ENCODE measurements at regions of chr15 and their contacts with region 1.

Region 1: DNA sequence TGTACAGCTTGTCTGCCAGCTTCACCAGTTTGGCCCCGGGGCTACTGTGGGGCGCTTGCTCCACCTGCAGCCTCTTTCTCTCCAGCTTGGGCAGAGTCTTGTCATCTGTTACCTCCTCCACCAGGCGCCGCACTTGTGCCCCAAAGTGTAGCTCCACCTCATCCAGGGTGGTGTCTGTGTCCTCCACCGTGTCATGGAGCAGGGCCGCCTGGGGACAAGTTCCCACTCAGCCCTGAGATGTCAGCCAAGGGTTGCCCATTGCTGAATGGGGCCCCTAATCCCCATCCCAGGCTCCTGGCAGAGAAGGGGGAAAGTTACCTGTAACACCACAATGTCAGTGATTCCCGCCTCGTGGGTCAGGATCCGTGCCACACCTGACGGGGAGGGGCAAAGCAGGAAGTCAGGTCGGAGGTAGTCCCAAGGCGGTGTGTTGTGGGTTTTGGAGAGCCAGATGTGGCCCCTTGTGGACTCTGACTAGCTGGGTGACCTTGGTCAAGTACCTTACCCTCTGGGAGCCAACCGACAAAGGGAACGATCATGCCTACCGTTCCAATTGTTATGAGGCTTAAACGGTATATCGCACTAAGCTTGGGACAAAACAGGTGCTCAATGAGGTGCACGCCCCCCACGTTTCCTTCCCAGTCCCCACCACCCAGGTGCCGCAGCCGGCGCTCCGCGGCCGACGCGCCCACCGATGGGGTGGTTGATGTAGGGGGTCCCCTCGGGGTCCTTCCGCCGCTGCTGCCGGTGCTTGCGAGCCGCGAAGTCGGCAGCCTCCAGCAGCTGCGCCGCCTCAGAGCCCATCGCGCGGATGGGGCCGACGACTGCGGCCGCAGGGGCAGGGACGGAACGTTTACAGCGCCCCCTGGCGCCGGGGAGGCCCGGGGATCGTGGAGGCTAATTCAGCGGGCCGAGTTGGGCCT is at the start of gene HDDC3:
- DNase-seq: peak; percentile 94
- H3K4me3 ChIP-seq: peak within 1 kb of the TSS; percentile 84 to 89
- H3K27ac ChIP-seq: peak within 1 kb of the TSS; percentile 32 to 80; a peak in 3 of 4 replicates
- H3K4me1 ChIP-seq: peaks cover 13 to 41% of the 10 kb centered on the region in 2 experiments; a peak in 2 of 4 replicates
- H3K27me3 ChIP-seq: no peaks in the 10 kb centered on the region
- CTCF ChIP-seq: peak; percentile 87
- EP300 ChIP-seq: no peak
- RAD21 ChIP-seq: peak; percentile 48
- polyA plus RNA-seq, gene HDDC3: 24.2 and 25.8 TPM in 2 replicates

Region 2: GRCh38 chr15:90648137-90649070 is 283.6 kb before region 1 on chr15:
- CTCF ChIA-PET with region 1: interaction called, 19 read pairs
- POLR2A ChIA-PET with region 1: no interaction called
- DNase-seq: peak; percentile 86
- H3K4me3 ChIP-seq: no peak overlapping the region
- H3K27ac ChIP-seq: no peak overlapping the region
- H3K4me1 ChIP-seq: peaks cover 5 to 12% of the 10 kb centered on the region in 2 experiments
- H3K27me3 ChIP-seq: no peaks in the 10 kb centered on the region
- CTCF ChIP-seq: peak; percentile 96
- EP300 ChIP-seq: no peak
- RAD21 ChIP-seq: peak; percentile 93

Region 3: DNA sequence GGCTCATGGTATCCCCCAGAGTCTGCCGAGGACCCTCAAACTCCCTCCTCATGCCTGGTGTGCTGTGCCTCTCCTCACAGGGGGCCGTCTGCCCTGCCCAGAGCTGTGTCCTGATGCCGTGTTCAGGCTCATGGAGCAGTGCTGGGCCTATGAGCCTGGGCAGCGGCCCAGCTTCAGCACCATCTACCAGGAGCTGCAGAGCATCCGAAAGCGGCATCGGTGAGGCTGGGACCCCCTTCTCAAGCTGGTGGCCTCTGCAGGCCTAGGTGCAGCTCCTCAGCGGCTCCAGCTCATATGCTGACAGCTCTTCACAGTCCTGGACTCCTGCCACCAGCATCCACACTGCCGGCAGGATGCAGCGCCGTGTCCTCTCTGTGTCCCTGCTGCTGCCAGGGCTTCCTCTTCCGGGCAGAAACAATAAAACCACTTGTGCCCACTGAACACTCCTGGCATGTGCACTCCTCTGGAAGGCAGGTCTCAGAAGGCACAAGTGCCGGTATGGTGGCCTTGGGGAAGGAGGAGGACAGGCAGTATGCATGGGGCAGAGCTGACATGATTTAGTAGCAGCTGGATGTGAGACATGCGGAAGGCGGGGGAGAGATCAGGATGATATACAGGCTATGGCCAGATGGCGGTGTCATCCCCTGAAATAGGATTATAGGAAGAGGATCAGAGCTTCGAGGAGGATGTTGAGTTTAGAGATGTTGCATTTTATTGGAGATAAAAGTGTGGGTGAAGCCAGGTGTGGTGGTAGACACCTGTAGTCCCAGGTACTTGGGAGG is 36.5 kb before region 1 on chr15:
- CTCF ChIA-PET with region 1: interaction called, 121 read pairs
- POLR2A ChIA-PET with region 1: interaction called, 8 read pairs
- DNase-seq: peak; percentile 86
- H3K4me3 ChIP-seq: no peak overlapping the region; a peak in 1 of 4 replicates
- H3K27ac ChIP-seq: peak overlapping the region in 1 of 2 experiments; percentile 83; a peak in 2 of 4 replicates
- H3K4me1 ChIP-seq: peaks cover 0 to 8% of the 10 kb centered on the region in 2 experiments; a peak in 1 of 4 replicates
- H3K27me3 ChIP-seq: no peaks in the 10 kb centered on the region
- CTCF ChIP-seq: peak; percentile 32
- EP300 ChIP-seq: peak in 1 of 2 experiments; percentile 30; a peak in 1 of 4 replicates
- RAD21 ChIP-seq: peak; percentile 36; the same call in 1 of the 2 replicates

Region 4: DNA sequence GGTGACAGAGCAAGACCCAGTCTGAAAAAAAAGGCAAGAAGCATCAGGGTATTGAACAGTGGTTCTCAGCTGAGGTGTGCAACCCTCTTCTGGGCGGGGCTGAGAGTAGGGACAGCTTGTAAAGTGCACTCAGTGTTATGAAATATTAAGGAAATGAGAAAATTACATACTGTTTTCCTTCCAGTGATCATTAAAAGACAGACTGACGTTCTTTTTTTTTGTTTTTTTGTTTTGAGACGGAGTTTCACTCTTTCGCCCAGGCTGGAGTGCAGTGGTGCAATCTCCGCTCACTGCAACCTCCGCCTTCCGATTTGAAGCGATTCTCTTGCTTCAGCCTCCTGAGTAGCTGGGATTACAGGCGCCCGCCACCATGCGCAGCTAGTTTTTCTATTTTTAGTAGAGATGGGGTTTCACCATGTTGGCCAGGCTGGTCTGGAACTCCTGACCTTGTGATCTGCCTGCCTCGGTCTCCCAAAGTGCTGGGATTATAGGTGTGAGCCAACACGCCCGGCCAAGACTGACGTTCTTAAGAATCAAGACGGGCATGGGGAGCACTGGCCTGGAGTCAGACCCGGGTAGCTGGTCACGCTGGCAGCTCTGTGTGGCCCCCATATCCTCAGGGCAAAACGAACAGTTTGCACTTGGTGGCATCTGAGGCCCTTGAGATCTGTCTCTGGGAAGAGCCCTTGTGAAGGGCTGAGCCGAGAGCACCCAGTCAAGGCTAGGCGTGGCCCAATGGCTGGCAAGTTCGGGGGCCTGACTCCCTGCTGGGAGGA is 17.5 kb before region 1 on chr15:
- CTCF ChIA-PET with region 1: interaction called, 16 read pairs
- POLR2A ChIA-PET with region 1: no interaction called
- DNase-seq: no peak
- H3K4me3 ChIP-seq: no peak overlapping the region
- H3K27ac ChIP-seq: no peak overlapping the region
- H3K4me1 ChIP-seq: no peaks in the 10 kb centered on the region
- H3K27me3 ChIP-seq: no peaks in the 10 kb centered on the region
- CTCF ChIP-seq: no peak
- EP300 ChIP-seq: no peak
- RAD21 ChIP-seq: no peak

Region 5: DNA sequence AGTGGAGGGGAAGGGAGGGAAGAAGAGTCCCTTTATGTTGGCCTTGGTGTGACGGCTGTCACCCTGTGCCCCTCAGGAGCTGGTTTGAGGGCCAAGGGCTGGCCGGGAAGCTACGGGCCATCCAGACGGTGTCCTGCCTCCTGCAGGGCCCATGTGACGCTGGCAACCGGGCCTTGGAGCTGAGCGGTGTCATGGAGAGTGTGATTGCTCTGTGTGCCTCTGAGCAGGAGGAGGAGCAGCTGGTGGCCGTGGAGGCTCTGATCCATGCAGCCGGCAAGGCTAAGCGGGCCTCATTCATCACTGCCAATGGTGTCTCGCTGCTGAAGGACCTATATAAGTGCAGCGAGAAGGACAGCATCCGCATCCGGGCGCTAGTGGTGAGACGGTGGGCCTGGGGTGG is 14.5 kb after region 1 on chr15:
- CTCF ChIA-PET with region 1: interaction called, 108 read pairs
- POLR2A ChIA-PET with region 1: interaction called, 8 read pairs
- DNase-seq: no peak
- H3K4me3 ChIP-seq: no peak overlapping the region
- H3K27ac ChIP-seq: no peak overlapping the region
- H3K4me1 ChIP-seq: no peaks in the 10 kb centered on the region
- H3K27me3 ChIP-seq: no peaks in the 10 kb centered on the region
- CTCF ChIP-seq: no peak
- EP300 ChIP-seq: no peak
- RAD21 ChIP-seq: no peak

Region 6: DNA sequence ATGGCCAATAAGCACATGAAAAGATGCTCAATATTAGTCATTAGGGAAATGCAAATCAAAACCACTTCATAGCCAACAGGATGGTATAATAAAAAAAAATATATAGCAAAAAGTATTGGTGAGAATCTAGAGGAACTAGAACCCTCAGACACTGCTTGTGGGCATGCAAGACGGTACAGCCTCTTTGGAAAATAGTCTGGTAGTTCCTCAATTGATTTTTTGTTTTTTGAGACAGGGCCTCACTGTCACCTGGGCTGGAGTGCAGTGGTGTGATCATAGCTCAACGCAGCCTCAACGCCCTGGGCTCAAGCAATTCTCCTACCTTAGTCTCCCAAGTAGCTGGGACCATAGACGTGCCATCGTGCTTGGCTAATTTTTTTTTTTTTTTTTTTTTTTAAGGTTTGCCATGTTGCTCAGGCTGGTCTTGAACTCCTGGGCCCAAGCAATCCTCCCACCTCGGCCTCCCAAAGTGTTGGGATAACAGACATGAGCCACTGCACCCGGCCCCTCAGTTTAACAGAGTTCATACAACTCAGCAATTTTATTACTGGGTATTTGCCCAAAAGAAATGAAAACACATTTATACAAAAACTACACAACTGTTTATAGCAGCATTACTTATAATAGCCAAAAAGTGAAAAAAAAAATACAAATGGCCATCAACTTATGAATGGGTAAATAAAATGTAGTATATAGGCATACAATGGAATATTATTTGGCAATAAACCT is 57.2 kb after region 1 on chr15:
- CTCF ChIA-PET with region 1: interaction called, 17 read pairs
- POLR2A ChIA-PET with region 1: no interaction called
- DNase-seq: no peak
- H3K4me3 ChIP-seq: no peak overlapping the region
- H3K27ac ChIP-seq: no peak overlapping the region
- H3K4me1 ChIP-seq: peaks cover 6 to 11% of the 10 kb centered on the region in 2 experiments
- H3K27me3 ChIP-seq: no peaks in the 10 kb centered on the region
- CTCF ChIP-seq: no peak
- EP300 ChIP-seq: no peak
- RAD21 ChIP-seq: no peak

Region 7: GRCh38 chr15:91049378-91050127 is 117.6 kb after region 1 on chr15:
- CTCF ChIA-PET with region 1: interaction called, 44 read pairs
- POLR2A ChIA-PET with region 1: no interaction called
- DNase-seq: peak; percentile 64
- H3K4me3 ChIP-seq: peak overlapping the region in 1 of 2 experiments; percentile 11; a peak in 1 of 4 replicates
- H3K27ac ChIP-seq: no peak overlapping the region
- H3K4me1 ChIP-seq: peaks cover 0 to 2% of the 10 kb centered on the region in 2 experiments; a peak in 1 of 4 replicates
- H3K27me3 ChIP-seq: peaks cover 10% of the 10 kb centered on the region; the same call in 1 of the 2 replicates
- CTCF ChIP-seq: peak; percentile 74
- EP300 ChIP-seq: no peak
- RAD21 ChIP-seq: peak; percentile 93